Activated CD4-positive, alpha-beta T cell treated with anti-CD3 and anti-CD28 coated beads for 36 hours (primary cell): ENCODE measurements at regions of chr12 and their contacts with region 1.

Region 1: DNA sequence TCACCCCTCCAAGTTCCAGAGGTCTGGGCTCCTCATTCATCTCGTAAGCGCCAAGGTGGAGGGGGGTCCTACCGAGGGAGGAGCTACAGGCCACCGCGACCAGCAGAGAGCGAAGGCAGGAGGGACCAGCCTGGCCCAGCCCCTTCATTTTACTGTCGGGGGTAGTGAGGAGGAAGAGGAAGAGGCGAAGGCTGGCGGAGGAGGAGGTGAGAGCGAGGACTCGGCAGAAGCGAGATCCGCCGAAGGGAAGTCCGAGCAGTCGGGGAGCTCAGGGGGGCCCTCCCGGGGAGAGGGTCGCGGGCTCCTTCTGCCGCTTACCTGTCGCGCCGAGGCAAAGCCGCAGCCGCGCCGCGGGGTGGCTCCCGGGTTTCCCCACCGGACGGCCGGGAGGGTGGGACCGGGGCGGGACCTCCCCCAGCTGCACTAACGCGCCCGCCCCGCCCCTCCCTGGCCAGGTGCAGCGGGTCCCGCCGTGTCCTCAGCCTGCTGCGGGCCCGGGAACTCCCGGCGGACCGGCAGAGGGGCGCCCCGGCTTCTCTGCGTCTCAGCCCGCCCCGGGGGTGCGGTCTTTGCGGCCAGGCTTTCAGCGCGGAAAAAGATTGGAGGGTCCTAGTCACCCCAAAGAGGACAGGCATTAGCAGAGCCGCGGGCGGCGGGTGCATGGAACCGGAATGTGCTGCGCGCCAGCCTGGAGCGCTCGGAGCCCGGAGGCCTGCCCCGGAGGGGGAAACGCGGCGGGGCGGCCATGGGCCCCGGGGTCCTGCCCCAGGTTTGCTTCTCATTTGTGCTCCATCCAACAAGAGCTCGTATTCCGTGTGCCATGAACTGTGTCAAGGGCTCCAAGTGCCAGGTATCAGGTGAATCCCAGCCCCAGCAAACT is at the start of gene GALNT6:
- DNase-seq: peak; percentile 78
- ATAC-seq: peak; percentile 43
- H3K4me3 Mint-ChIP-seq: peak within 1 kb of the TSS; percentile 85
- H3K27ac Mint-ChIP-seq: peak within 1 kb of the TSS; percentile 67
- H3K4me1 Mint-ChIP-seq: peaks cover 79% of the 10 kb centered on the region
- H3K27me3 Mint-ChIP-seq: no peaks in the 10 kb centered on the region
- total RNA-seq, gene GALNT6: 11.7 to 12.0 TPM

Region 2: DNA sequence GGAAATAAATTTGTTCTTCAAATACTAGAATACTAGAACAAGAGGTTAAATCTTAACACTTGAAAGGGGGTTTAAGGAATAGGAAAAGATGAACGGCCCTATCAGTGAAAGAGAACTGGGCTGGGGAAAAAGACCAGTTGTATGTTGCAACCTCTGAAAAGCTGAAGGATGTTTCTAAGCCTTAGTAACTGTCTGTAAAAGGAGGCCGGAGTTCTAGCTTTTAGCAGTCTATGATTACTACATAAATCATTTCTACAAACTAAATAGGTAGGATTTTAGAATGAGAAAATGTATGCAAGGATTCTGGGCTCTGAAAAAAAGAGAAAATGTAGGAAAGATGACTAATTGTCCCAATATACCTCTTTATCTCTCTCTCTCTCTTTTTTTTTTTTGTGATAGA is 1229.3 kb before region 1 on chr12:
- CTCF ChIA-PET with region 1: no interaction called
- POLR2A ChIA-PET with region 1: no interaction called
- intact Hi-C with region 1: no loop called
- DNase-seq: no peak
- ATAC-seq: no peak
- H3K4me3 Mint-ChIP-seq: no peak overlapping the region
- H3K27ac Mint-ChIP-seq: no peak overlapping the region
- H3K4me1 Mint-ChIP-seq: peaks cover 48% of the 10 kb centered on the region
- H3K27me3 Mint-ChIP-seq: no peaks in the 10 kb centered on the region

Region 3: GRCh38 chr12:51246254-51246853 is 145.2 kb before region 1 on chr12:
- CTCF ChIA-PET with region 1: interaction called, 3 read pairs
- POLR2A ChIA-PET with region 1: interaction called, 16 read pairs
- intact Hi-C with region 1: no loop called
- DNase-seq: peak; percentile 58
- ATAC-seq: peak; percentile 74
- H3K4me3 Mint-ChIP-seq: peak overlapping the region; percentile 36
- H3K27ac Mint-ChIP-seq: peak overlapping the region; percentile 74
- H3K4me1 Mint-ChIP-seq: peaks cover 49% of the 10 kb centered on the region
- H3K27me3 Mint-ChIP-seq: no peaks in the 10 kb centered on the region

Region 4: DNA sequence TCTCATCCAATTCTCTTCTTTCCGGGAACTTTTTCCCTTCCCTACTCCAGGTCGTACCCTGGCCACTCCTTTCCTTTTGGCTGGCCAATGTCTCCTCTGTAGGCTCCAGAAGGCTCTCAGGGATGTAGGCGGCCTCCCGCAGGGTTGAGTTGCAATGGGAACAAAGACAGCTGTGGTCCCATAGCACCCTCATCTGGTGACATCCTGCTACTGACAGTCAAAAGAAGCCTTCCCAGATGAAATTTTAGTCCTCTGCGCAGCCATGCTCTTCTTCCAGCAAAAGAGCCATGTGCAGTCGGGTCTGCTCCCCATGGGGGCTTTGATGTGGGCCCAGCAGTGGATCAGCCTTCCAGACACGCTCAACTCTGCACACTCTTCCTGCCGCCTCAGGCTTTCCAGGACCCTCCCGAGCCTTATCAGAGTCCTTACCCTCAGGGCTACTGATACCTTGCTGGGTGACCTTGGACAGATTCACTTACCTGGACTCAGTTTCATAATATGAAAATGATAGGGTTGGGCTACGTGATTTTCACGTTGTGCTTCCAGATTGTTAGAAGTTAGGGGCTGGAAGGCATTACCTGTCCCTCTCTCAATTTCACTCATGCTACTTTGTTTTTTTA is 39.5 kb before region 1 on chr12:
- CTCF ChIA-PET with region 1: no interaction called
- POLR2A ChIA-PET with region 1: no interaction called
- intact Hi-C with region 1: no loop called
- DNase-seq: peak; percentile 68
- ATAC-seq: peak; percentile 79
- H3K4me3 Mint-ChIP-seq: no peak overlapping the region
- H3K27ac Mint-ChIP-seq: no peak overlapping the region
- H3K4me1 Mint-ChIP-seq: peaks cover under 1% of the 10 kb centered on the region
- H3K27me3 Mint-ChIP-seq: no peaks in the 10 kb centered on the region

Region 5: GRCh38 chr12:51368640-51369517 is 22.6 kb before region 1 on chr12:
- CTCF ChIA-PET with region 1: interaction called, 7 read pairs
- POLR2A ChIA-PET with region 1: interaction called, 9 read pairs
- intact Hi-C with region 1: loop called (anchors 1 kb)
- DNase-seq: peak; percentile 94
- ATAC-seq: peak; percentile 97
- H3K4me3 Mint-ChIP-seq: peak overlapping the region; percentile 64
- H3K27ac Mint-ChIP-seq: peak overlapping the region; percentile 77
- H3K4me1 Mint-ChIP-seq: peaks cover 59% of the 10 kb centered on the region
- H3K27me3 Mint-ChIP-seq: no peaks in the 10 kb centered on the region